Aorta (tissue), 5 donors: ENCODE measurements at regions of chr6 and their contacts with region 1.

Region 1: GRCh38 chr6:26065952-26066380 is 21.3 kb upstream of the HFE start:
- DNase-seq: peak in 1 of 2 donors; percentile 71
- ATAC-seq: peak; percentile 90
- H3K4me3 ChIP-seq: no peak overlapping the region
- H3K27ac ChIP-seq: no peak overlapping the region
- H3K4me1 ChIP-seq: no peaks in the 10 kb centered on the region
- H3K27me3 ChIP-seq: no peaks in the 10 kb centered on the region

Region 2: GRCh38 chr6:26097268-26097875 is 31.4 kb after region 1 on chr6:
- intact Hi-C with region 1: loop called (anchors 1 to 2 kb)
- DNase-seq: no peak
- ATAC-seq: peak; percentile 84
- H3K4me3 ChIP-seq: no peak overlapping the region
- H3K27ac ChIP-seq: no peak overlapping the region
- H3K4me1 ChIP-seq: no peaks in the 10 kb centered on the region
- H3K27me3 ChIP-seq: no peaks in the 10 kb centered on the region

Region 3: DNA sequence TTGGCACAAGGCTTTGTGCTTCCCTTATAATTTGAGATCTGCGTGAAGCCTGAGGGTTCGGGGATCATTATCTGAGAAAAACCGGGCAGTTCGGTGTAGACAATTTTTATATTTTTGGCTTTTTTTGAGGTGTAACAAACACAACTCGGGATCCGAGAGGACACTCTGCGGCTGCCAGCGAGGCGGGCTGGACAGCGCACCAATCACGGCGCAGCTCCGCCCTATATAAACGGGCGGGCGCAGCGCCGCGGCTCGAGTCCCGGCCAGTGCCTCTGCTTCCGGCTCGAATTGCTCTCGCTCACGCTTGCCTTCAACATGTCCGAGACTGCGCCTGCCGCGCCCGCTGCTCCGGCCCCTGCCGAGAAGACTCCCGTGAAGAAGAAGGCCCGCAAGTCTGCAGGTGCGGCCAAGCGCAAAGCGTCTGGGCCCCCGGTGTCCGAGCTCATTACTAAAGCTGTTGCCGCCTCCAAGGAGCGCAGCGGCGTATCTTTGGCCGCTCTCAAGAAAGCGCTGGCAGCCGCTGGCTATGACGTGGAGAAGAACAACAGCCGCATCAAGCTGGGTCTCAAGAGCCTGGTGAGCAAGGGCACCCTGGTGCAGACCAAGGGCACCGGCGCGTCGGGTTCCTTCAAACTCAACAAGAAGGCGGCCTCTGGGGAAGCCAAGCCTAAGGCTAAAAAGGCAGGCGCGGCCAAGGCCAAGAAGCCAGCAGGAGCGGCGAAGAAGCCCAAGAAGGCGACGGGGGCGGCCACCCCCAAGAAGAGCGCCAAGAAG is 90.3 kb after region 1 on chr6:
- intact Hi-C with region 1: no loop called
- DNase-seq: peak; percentile 93 to 96
- ATAC-seq: peak; percentile 94
- H3K4me3 ChIP-seq: peak overlapping the region; percentile 78 to 96
- H3K27ac ChIP-seq: peak overlapping the region; percentile 93 to 99
- H3K4me1 ChIP-seq: peaks cover 0 to 4% of the 10 kb centered on the region in 2 donors
- H3K27me3 ChIP-seq: peaks cover 0 to 4% of the 10 kb centered on the region in 2 donors